ENCODE measurements at regions of chr17 and their contacts with region 1.

Region 1: DNA sequence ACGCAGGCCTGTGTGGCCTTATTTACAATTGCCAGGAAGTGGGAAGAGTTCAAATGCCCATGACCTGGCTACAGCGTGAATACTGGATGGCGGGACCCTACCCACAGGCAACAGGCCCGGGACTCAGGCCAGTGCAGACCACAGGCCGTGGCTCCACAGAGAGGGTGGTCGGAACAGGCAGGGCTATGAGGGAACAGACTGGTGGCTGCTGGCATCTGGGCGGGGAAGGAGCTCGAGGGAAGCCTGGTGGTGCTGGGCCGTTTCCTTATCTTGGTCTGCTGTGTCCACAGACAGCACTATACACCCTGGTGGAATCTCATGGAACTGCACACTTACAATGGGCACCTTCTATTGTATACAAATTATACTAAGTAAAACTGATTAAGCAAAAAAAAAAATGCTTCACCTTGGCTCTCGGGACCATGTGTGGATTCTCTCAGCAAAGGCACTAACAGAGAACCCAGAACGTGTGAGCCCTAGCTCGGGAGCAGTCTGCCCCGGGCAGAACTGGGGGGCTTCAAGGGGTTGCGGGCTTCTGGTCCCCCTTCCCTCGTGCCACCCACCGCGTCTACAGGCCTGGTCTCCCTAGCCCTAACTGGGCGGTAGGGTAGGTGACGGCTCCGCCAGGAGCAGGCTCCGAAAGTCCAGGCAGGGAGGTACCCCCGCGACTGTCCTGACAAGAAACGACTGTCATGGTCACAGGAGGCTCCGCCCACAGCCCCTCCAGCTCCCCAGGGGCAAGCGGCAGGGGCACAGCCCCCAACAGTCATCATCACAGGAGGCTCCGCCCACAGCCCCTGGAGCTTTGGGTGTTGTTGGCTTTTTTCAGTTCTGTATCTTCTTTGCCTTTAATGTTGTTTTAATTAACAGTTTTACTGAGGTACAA is 21.8 kb downstream of the CEP131 start:
- DNase-seq: peak; percentile 59
- ATAC-seq: peak; percentile 63 to 74

Region 2: DNA sequence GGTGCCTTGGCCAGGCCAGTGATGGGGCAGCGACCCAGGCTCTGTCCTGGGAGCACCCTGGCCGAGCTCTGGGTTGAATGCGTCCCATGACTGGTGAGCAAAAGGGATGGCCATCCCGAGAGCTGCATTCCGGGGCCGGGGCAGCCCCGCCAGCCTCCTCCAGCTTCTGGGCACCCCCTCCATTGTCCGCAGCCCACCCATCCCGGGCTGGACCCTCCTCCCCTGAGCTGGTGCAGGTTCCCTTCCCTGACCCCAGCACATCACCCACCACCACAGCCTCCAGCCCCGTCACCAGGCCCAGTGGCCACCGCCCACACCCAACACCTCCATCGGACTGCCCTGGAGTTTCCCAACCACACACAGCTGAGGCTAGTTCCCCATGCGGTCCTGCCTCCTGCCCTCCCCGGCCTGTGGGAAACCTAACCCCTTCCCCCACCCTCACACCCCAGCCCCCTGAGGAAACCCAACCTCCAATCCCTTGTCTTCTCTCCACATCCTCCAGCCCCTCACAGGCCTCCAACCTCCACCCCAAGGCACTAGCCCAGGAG is 51.9 kb before region 1 on chr17:
- intact Hi-C with region 1: loop called (anchors 5 to 10 kb)
- DNase-seq: no peak
- ATAC-seq: peak in 1 of 2 donors; percentile 24